PC-9 (cell line): ENCODE measurements at regions of chr20 and their contacts with region 1.

Region 1: GRCh38 chr20:44153636-44154043 is 33.3 kb downstream of the JPH2 start:
- DNase-seq: peak in 1 of 2 experiments; percentile 29
- H3K4me3 ChIP-seq: no peak overlapping the region
- H3K27ac ChIP-seq: no peak overlapping the region
- H3K4me1 ChIP-seq: peaks cover 32% of the 10 kb centered on the region
- H3K27me3 ChIP-seq: no peaks in the 10 kb centered on the region
- CTCF ChIP-seq: no peak

Region 2: GRCh38 chr20:43490038-43490437 is 663.6 kb before region 1 on chr20:
- CTCF ChIA-PET with region 1: no interaction called
- POLR2A ChIA-PET with region 1: interaction called, 40 read pairs
- intact Hi-C with region 1: no loop called
- DNase-seq: no peak
- H3K4me3 ChIP-seq: no peak overlapping the region
- H3K27ac ChIP-seq: no peak overlapping the region
- H3K4me1 ChIP-seq: peaks cover 6% of the 10 kb centered on the region; the same call in 1 of the 2 replicates
- H3K27me3 ChIP-seq: no peaks in the 10 kb centered on the region
- CTCF ChIP-seq: no peak

Region 3: DNA sequence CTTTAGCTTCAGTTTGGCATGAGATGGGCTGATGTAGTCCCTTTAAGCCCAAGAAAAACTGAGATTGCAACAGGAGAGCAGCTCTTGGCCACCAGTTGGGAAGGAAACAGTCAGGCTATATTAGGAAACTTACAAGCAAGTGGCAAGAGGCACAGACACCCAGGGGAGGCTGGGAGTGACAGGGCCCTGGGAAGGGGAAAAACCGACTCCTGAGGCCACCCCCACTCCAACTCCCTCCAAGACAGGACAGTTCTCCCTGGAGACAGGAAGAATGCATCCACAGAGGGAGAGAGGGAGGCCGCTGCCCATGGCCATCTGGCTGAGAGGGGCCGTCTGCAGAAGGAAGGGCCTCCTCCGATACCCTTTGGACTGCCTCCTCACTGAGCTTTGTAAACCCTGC is 12.8 kb after region 1 on chr20:
- CTCF ChIA-PET with region 1: interaction called, 5 read pairs
- POLR2A ChIA-PET with region 1: interaction called, 20 read pairs
- intact Hi-C with region 1: loop called (anchors 1 kb)
- DNase-seq: peak; percentile 57 to 82
- H3K4me3 ChIP-seq: peak overlapping the region; percentile 11; the same call in 1 of the 2 replicates
- H3K27ac ChIP-seq: peak overlapping the region; percentile 90
- H3K4me1 ChIP-seq: peaks cover 75% of the 10 kb centered on the region
- H3K27me3 ChIP-seq: no peaks in the 10 kb centered on the region
- CTCF ChIP-seq: no peak

Region 4: DNA sequence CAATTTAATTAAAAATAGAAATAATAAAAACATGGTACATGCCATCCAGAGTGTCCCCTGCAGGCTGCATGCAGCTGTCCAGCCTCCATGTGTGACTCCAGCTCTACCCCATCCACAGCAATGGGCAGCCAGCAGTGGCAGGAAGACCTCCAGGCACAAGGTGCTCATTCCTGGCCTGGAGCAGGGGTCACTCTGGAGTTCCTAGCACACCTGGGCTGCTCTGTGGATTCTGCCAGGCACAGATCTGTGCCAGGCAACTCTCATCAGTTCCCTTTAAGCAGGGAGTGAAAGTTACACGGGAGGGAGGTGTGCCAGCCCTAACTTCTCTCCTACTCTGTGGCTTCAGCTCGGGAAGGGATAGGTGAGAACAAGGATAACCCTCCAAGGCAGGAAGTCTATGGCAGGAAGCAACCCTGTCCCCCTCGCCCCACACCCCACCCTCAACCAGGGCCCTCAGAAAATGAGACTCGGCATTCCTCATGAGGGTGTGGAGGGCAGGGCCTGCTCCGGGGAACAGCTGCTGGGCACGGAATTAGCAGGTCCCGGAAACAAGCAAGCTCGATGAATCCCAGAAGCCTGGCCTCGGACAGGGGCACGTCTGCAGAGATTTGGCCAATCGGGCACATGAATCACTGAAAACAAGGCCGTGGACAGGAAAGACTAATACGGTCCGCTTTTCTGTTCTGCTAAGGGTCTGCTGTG is 23.3 kb after region 1 on chr20:
- CTCF ChIA-PET with region 1: interaction called, 4 read pairs
- POLR2A ChIA-PET with region 1: interaction called, 8 read pairs
- intact Hi-C with region 1: loop called (anchors 1 kb)
- DNase-seq: peak; percentile 92 to 93
- H3K4me3 ChIP-seq: peak overlapping the region; percentile 41
- H3K27ac ChIP-seq: peak overlapping the region; percentile 99
- H3K4me1 ChIP-seq: peaks cover 84% of the 10 kb centered on the region
- H3K27me3 ChIP-seq: no peaks in the 10 kb centered on the region
- CTCF ChIP-seq: no peak

Region 5: DNA sequence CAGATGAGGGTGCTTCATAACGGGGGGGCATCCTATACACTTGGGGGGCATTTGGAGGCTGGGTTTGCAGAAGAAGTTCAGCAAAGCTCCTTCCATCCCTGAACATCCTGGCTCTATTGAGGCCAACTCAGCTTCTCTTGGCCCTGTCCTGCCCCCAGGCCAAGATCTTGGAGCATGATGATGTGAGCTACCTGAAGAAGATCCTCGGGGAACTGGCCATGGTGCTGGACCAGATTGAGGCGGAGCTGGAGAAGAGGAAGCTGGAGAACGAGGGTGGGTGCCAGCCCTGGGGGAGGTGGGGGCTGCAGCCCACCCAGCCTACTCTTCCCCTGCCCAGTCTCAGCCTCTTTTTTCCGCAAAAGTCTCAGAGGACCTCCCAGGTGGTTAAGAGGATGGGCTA is 110.6 kb after region 1 on chr20:
- CTCF ChIA-PET with region 1: no interaction called
- POLR2A ChIA-PET with region 1: no interaction called
- intact Hi-C with region 1: no loop called
- DNase-seq: no peak
- H3K4me3 ChIP-seq: no peak overlapping the region
- H3K27ac ChIP-seq: no peak overlapping the region
- H3K4me1 ChIP-seq: no peaks in the 10 kb centered on the region
- H3K27me3 ChIP-seq: peaks cover 57% of the 10 kb centered on the region; the same call in 1 of the 2 replicates
- CTCF ChIP-seq: no peak

Region 6: DNA sequence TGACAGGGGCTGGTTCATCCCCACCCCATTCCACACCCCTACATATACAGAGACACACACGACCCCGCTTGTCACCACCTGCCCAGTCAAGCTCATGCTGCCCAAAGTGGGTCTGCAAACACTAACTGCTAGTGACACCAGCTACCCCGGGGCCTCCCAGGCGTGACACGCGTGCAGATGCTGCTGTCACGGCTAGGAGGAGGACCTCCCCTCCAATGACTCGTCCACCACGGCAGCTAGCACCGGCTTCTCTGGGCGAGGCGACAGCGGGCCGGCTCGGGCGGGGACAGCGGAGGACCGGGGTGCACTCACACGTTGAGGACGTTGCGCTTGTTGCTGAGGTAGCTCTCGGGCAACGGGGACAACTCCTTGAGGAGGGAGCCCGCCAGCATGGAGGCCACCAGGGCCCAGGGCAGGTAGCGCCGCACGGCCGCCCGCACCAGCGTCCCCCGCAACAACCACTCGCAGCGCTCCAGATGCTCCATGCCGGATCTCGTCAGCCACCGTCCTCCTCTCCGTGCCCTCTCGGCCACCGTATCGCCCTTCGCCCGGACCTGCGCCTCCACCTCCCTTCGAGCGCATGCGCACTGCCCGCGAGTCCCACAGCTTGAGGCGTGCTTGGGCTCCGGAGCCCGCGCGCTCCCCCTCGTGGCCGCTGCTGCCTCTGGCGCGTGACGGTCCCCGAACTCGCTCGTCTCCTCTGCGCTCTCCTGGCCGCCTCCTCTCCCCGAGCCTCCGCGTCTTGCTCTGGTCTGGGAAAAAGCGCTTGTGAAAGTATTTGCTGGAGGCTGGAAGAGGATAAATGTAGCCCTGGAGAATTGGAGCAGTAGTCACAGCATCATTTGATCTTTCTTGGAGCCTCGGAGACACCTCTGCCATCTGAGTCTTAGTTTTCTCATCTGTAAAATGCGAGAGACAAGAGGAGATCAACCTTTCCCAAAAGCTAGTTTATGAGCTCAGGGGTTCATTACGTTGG is 157.3 kb after region 1 on chr20 and contains the start of gene FITM2:
- CTCF ChIA-PET with region 1: no interaction called
- POLR2A ChIA-PET with region 1: no interaction called
- intact Hi-C with region 1: no loop called
- DNase-seq: peak; percentile 86 to 98
- H3K4me3 ChIP-seq: peak within 1 kb of the TSS; percentile 69
- H3K27ac ChIP-seq: no peak within 1 kb of the TSS
- H3K4me1 ChIP-seq: peaks cover 10% of the 10 kb centered on the region
- H3K27me3 ChIP-seq: no peaks in the 10 kb centered on the region
- CTCF ChIP-seq: peak; percentile 94
- total RNA-seq, gene FITM2: 6.1 and 7.4 TPM in 2 replicates

Region 7: DNA sequence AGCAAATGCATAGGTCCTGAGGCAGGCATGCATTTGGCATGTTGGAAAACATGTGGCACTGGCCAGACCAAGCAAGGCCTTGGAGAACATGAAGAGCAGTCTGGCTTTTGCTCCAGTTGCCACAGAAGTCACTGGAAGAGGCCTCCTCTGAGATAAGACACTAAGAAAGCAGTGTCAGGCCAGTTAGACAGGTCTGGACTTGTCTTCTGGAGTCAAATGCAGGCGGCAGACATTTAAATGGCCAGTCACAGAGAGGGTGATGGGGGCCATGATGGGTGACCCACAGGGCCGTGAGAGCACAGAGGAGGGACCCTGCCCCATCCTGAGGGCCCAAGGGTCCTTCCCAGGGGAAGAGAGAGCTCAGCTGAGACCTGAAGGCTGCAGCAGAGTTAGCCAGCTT is 524.6 kb after region 1 on chr20:
- CTCF ChIA-PET with region 1: interaction called, 17 read pairs
- POLR2A ChIA-PET with region 1: no interaction called
- intact Hi-C with region 1: no loop called
- DNase-seq: peak in 1 of 2 experiments; percentile 35
- H3K4me3 ChIP-seq: no peak overlapping the region
- H3K27ac ChIP-seq: no peak overlapping the region
- H3K4me1 ChIP-seq: peaks cover 8% of the 10 kb centered on the region
- H3K27me3 ChIP-seq: no peaks in the 10 kb centered on the region
- CTCF ChIP-seq: no peak

Region 8: GRCh38 chr20:45924391-45925261 is 1771.0 kb after region 1 on chr20:
- CTCF ChIA-PET with region 1: no interaction called
- POLR2A ChIA-PET with region 1: no interaction called
- intact Hi-C with region 1: no loop called
- DNase-seq: no peak
- H3K4me3 ChIP-seq: no peak overlapping the region
- H3K27ac ChIP-seq: no peak overlapping the region
- H3K4me1 ChIP-seq: no peaks in the 10 kb centered on the region
- H3K27me3 ChIP-seq: no peaks in the 10 kb centered on the region
- CTCF ChIP-seq: no peak